Testis (tissue), 5 donors: ENCODE measurements at regions of chr15 and their contacts with region 1.

Region 1: GRCh38 chr15:101008158-101009139 is 89.3 kb downstream of the LRRK1 start:
- DNase-seq: peak; percentile 86
- H3K4me3 ChIP-seq: peak overlapping the region; percentile 13 to 51
- H3K27ac ChIP-seq: no peak overlapping the region
- H3K4me1 ChIP-seq: peaks cover 3% of the 10 kb centered on the region
- H3K27me3 ChIP-seq: no peaks in the 10 kb centered on the region
- CTCF ChIP-seq: peak; percentile 72 to 93 (median 86)
- POLR2A ChIP-seq: no peak

Region 2: DNA sequence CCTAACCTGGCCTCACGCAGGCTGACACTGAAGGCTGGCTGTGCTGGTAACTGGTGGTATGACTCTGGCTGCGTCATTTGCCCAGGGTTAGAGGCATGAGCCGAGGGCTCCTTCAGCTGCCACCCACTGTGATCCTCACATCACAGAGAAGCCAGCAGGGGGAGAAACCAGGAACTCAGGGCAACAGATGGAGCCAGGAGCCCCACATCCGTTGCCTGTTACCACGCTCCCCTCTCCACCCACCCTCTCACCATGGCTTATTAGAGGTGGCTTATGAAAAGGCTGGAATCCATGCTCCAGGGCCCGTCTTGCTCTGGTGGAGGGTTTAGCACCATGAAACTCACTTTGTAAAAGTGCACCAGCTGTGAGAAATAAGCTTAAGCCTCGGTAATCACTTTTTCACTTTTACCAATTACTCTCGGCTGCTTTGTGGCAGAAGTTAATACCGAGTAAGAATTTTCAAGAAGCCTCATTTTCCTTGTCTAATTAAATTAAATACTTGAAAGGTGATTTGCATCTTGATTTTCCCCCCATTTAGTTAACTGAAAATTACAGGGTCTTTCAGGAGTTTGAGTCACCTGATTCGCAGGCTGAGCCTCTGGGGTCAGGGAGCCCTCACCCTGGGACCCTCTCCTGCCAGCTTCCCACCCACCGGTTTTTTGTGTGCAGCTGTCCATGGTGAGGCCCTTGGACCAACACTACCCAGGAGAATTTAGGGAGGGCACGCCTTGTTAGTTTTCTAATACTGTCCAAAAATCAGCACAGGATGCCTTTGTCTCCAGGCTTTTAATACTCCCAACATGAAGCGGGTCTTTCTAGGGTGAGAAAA is 345.1 kb before region 1 on chr15:
- intact Hi-C with region 1: loop called (anchors 10 kb)
- DNase-seq: no peak
- H3K4me3 ChIP-seq: no peak overlapping the region
- H3K27ac ChIP-seq: peak overlapping the region in 1 of 2 donors; percentile 30
- H3K4me1 ChIP-seq: peaks cover 6% of the 10 kb centered on the region
- H3K27me3 ChIP-seq: no peaks in the 10 kb centered on the region
- CTCF ChIP-seq: peak in 1 of 3 experiments; percentile 18
- POLR2A ChIP-seq: no peak

Region 3: GRCh38 chr15:100918034-100918689 is 90.3 kb before region 1 on chr15:
- intact Hi-C with region 1: loop called (anchors 10 kb)
- DNase-seq: peak; percentile 81
- H3K4me3 ChIP-seq: peak overlapping the region; percentile 74 to 79
- H3K27ac ChIP-seq: peak overlapping the region; percentile 78 to 88
- H3K4me1 ChIP-seq: peaks cover 25% of the 10 kb centered on the region
- H3K27me3 ChIP-seq: no peaks in the 10 kb centered on the region
- CTCF ChIP-seq: peak; percentile 83 to 84 (median 83)
- POLR2A ChIP-seq: no peak

Region 4: DNA sequence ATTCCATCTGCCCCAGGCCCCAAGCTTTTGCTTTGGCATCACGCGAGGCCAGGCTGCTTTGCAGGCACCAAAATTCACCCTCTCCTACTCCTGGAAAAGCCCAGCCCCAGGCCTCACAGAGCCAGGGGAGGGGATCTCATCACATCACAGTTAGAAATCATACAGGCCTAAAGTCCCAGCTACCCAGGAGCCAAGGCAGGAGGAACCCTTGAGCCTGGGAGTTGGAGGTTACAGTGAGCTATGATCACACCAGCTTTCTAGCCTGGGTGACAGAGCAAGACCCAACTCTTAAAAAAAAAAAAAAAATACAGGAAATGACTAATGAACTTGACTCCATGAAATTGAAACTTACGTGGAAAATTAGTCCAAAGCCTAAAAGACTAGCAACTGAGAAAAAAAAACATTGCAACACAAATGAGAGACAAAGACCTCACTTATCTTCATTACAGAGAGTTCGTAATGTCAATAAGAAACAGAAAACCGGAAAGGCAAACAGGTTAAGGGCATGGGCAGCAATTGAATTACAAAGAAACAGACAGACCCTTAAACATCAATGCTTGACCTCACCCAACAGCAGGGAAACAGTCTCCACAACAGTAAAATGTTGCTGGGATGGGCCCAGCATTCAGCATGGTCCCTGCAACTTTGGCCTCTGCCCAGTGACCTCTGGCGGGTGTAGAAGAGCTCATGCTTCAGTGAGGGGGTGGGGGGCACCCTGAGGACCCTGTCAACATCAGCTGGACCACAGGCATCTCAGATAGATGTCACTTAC is 62.2 kb after region 1 on chr15:
- intact Hi-C with region 1: no loop called
- DNase-seq: no peak
- H3K4me3 ChIP-seq: no peak overlapping the region
- H3K27ac ChIP-seq: peak overlapping the region in 1 of 2 donors; percentile 64
- H3K4me1 ChIP-seq: peaks cover 34% of the 10 kb centered on the region
- H3K27me3 ChIP-seq: no peaks in the 10 kb centered on the region
- CTCF ChIP-seq: no peak
- POLR2A ChIP-seq: no peak